Upper lobe of right lung (tissue), 1 donor: ENCODE measurements at regions of chr2 and their contacts with region 1.

Region 1: GRCh38 chr2:113203901-113204519 is 30.2 kb downstream of the PSD4 start:
- DNase-seq: peak; percentile 78
- ATAC-seq: peak; percentile 79
- H3K4me3 ChIP-seq: no peak overlapping the region
- H3K27ac ChIP-seq: no peak overlapping the region
- H3K4me1 ChIP-seq: peaks cover 5% of the 10 kb centered on the region
- H3K27me3 ChIP-seq: no peaks in the 10 kb centered on the region
- CTCF ChIP-seq: peak; percentile 84

Region 2: GRCh38 chr2:112985090-112985489 is 218.9 kb before region 1 on chr2:
- intact Hi-C with region 1: no loop called
- DNase-seq: no peak
- ATAC-seq: peak; percentile 13
- H3K4me3 ChIP-seq: no peak overlapping the region
- H3K27ac ChIP-seq: no peak overlapping the region
- H3K4me1 ChIP-seq: no peaks in the 10 kb centered on the region
- H3K27me3 ChIP-seq: peaks cover 4% of the 10 kb centered on the region
- CTCF ChIP-seq: no peak

Region 3: GRCh38 chr2:113041871-113042508 is 162.0 kb before region 1 on chr2:
- intact Hi-C with region 1: no loop called
- DNase-seq: no peak
- ATAC-seq: no peak
- H3K4me3 ChIP-seq: no peak overlapping the region
- H3K27ac ChIP-seq: no peak overlapping the region
- H3K4me1 ChIP-seq: no peaks in the 10 kb centered on the region
- H3K27me3 ChIP-seq: no peaks in the 10 kb centered on the region
- CTCF ChIP-seq: peak; percentile 10

Region 4: GRCh38 chr2:113240150-113240862 is 36.3 kb after region 1 on chr2:
- intact Hi-C with region 1: loop called (anchors 5 kb)
- DNase-seq: peak; percentile 86
- ATAC-seq: peak; percentile 15
- H3K4me3 ChIP-seq: no peak overlapping the region
- H3K27ac ChIP-seq: no peak overlapping the region
- H3K4me1 ChIP-seq: peaks cover 19% of the 10 kb centered on the region
- H3K27me3 ChIP-seq: no peaks in the 10 kb centered on the region
- CTCF ChIP-seq: no peak